ENCODE measurements at regions of chr6 and their contacts with region 1.

Region 1: DNA sequence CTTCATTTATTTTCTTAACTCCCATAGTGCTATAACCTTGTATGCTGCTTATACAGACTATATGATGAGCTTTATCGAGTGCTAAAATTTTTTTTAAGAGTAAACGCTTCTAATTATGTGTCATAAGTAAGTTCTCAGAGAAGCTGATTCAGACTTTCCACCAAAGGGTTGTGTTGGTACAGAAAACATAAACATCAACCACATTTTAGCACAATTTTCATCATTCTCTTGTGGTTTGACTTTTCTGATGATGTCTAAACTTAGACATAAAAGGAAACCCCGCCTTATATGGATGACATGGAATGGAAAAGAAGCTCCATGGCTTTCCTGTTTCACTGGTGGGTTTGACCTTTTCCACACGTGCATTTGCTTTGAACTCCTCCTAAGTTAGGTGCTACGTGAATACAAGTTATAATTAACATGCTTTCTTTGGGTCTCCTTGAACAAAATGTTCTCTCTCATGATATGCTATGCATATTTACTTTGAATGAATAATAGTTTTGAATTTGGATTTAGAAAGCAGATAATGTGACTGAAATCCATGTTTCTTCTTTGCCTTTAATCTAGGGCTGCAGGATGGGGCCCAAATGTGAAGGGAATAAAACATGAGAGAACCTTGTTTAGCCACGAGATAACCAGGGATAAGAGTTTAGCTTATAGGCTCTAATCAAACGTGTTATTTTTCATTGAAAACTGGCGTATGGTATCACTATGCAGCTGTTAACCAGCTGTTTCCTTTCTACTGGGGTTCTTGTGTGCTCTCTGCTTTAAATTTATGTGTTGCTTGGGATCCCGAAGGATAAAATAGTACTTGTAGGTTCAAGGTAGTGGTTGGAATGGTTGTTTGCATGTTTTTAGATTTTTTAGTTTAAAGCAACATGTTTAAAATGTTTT is 127.1 kb upstream of the AHI1 start:
- DNase-seq: peak in 3 of 9 donors; percentile 1 to 9 (median 7)
- ATAC-seq: no peak
- H3K4me3 ChIP-seq: no peak overlapping the region
- H3K4me3 Mint-ChIP-seq: peak overlapping the region in 2 of 10 donors; percentile 2 to 17
- H3K27ac ChIP-seq: no peak overlapping the region
- H3K27ac Mint-ChIP-seq: peak overlapping the region in 3 of 9 donors; percentile 13 to 91 (median 47)
- H3K4me1 ChIP-seq: no peaks in the 10 kb centered on the region
- H3K4me1 Mint-ChIP-seq: peaks cover 5 to 51% (median 16%) of the 10 kb centered on the region in 7 donors
- H3K27me3 ChIP-seq: no peaks in the 10 kb centered on the region
- H3K27me3 Mint-ChIP-seq: no peaks in the 10 kb centered on the region

Region 2: GRCh38 chr6:135568366-135568765 is 56.3 kb before region 1 on chr6:
- CTCF ChIA-PET with region 1: no interaction called
- POLR2A ChIA-PET with region 1: no interaction called
- intact Hi-C with region 1: loop called in 1 of 2 experiments (anchors 1 kb)
- DNase-seq: peak in 8 of 9 donors; percentile 27 to 63 (median 44)
- ATAC-seq: peak; percentile 85
- H3K4me3 ChIP-seq: no peak overlapping the region
- H3K4me3 Mint-ChIP-seq: peak overlapping the region in 3 of 10 donors; percentile 5 to 57 (median 13)
- H3K27ac ChIP-seq: no peak overlapping the region
- H3K27ac Mint-ChIP-seq: peak overlapping the region in 4 of 9 donors; percentile 16 to 90 (median 18)
- H3K4me1 ChIP-seq: peaks cover 0 to 9% of the 10 kb centered on the region in 2 donors
- H3K4me1 Mint-ChIP-seq: peaks cover 0 to 77% (median 7%) of the 10 kb centered on the region in 7 donors
- H3K27me3 ChIP-seq: no peaks in the 10 kb centered on the region
- H3K27me3 Mint-ChIP-seq: no peaks in the 10 kb centered on the region

Region 3: DNA sequence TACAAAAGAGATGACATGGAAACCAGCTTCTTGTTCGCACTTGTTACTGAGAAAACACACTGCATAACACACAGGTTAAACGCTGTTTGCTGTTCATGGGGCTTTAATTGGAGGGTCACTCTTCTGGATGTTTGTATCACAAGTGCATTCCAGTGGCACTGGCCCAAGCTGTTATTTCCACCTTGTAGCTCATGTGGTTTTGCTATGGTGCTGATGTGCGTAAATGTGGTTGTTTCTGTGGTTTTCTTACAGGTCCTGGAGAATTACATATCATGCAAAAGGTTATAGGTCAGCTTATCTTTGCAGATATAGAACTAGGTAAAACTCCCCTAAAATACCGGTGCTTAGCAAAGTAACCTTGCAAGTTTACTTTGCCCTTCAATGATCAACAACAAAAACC is 37.8 kb before region 1 on chr6:
- CTCF ChIA-PET with region 1: no interaction called
- POLR2A ChIA-PET with region 1: no interaction called
- intact Hi-C with region 1: loop called in 1 of 2 experiments (anchors 1 kb)
- DNase-seq: peak in 2 of 9 donors; percentile 6 to 13
- ATAC-seq: peak; percentile 32
- H3K4me3 ChIP-seq: no peak overlapping the region
- H3K4me3 Mint-ChIP-seq: peak overlapping the region in 1 of 10 donors; percentile 50
- H3K27ac ChIP-seq: no peak overlapping the region
- H3K27ac Mint-ChIP-seq: peak overlapping the region in 1 of 9 donors; percentile 91
- H3K4me1 ChIP-seq: no peaks in the 10 kb centered on the region
- H3K4me1 Mint-ChIP-seq: peaks cover 1 to 62% (median 13%) of the 10 kb centered on the region in 7 donors
- H3K27me3 ChIP-seq: no peaks in the 10 kb centered on the region
- H3K27me3 Mint-ChIP-seq: no peaks in the 10 kb centered on the region

Region 4: GRCh38 chr6:135640449-135641111 is 15.9 kb after region 1 on chr6:
- CTCF ChIA-PET with region 1: no interaction called
- POLR2A ChIA-PET with region 1: no interaction called
- intact Hi-C with region 1: loop called in 1 of 2 experiments (anchors 2 kb)
- DNase-seq: no peak
- ATAC-seq: no peak
- H3K4me3 ChIP-seq: no peak overlapping the region
- H3K4me3 Mint-ChIP-seq: peak overlapping the region in 1 of 10 donors; percentile 50
- H3K27ac ChIP-seq: no peak overlapping the region
- H3K27ac Mint-ChIP-seq: peak overlapping the region in 2 of 9 donors; percentile 4 to 77
- H3K4me1 ChIP-seq: no peaks in the 10 kb centered on the region
- H3K4me1 Mint-ChIP-seq: peaks cover 0 to 52% (median 10%) of the 10 kb centered on the region in 7 donors
- H3K27me3 ChIP-seq: no peaks in the 10 kb centered on the region
- H3K27me3 Mint-ChIP-seq: no peaks in the 10 kb centered on the region

Measured in naive thymus-derived CD4-positive, alpha-beta T cell (primary cell).